ENCODE measurements at regions of chr1 and their contacts with region 1.

Region 1: GRCh38 chr1:42173155-42173933 is 8.8 kb upstream of the GUCA2A start:
- DNase-seq: peak; percentile 59 to 82 (median 77)
- ATAC-seq: peak; percentile 32 to 66
- H3K4me3 ChIP-seq: no peak overlapping the region
- H3K27ac ChIP-seq: peak overlapping the region; percentile 90
- H3K4me1 ChIP-seq: peaks cover 17% of the 10 kb centered on the region
- H3K27me3 ChIP-seq: no peaks in the 10 kb centered on the region

Region 2: DNA sequence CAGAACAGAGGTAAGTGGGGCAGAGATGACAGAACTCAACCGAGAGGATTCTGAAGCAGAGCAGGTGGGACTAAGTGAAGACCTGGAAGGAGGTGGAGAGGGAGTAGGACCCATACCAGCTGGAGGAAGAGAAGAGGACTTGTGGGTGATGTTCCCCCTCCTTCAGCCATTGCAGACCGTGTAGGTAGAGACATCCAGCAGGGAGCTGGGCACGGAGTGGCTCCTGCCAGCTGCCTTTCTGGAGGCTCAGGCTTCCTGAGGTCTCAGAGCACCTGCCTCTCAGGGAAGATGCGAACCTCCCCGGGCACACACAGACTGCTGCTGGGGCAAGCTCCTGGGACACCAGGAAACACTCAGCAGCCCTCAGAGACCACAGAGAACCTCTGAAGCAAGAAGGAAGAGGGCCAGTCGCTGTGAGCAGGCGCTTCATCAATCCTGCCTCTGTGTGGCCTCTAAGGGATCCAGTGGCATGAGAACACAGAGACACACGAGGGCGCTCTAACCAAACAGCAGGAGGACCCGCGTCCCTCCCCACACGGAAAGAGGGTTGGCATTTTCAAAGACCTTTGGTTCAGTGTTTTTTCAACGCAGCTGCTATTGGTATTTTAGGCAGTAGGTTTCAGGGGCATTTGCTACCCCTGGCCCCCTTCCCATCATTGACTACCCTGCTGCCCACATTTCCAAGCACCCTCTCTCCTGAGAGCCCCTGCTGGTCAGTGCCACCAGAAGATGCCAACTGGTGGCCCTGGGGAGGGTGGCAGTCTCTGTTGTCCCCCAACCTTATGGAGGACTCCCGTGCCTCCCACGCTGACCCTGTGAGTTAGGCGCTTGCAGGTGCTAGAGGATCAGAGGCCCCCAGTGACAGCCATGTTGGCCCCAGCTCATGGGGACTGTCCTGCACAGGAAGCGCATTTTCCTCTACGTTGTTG is 599.3 kb before region 1 on chr1:
- intact Hi-C with region 1: loop called in 1 of 4 experiments (anchors 10 kb)
- DNase-seq: peak; percentile 79 to 92 (median 88)
- ATAC-seq: peak; percentile 80 to 90
- H3K4me3 ChIP-seq: no peak overlapping the region
- H3K27ac ChIP-seq: no peak overlapping the region
- H3K4me1 ChIP-seq: no peaks in the 10 kb centered on the region
- H3K27me3 ChIP-seq: no peaks in the 10 kb centered on the region

Region 3: DNA sequence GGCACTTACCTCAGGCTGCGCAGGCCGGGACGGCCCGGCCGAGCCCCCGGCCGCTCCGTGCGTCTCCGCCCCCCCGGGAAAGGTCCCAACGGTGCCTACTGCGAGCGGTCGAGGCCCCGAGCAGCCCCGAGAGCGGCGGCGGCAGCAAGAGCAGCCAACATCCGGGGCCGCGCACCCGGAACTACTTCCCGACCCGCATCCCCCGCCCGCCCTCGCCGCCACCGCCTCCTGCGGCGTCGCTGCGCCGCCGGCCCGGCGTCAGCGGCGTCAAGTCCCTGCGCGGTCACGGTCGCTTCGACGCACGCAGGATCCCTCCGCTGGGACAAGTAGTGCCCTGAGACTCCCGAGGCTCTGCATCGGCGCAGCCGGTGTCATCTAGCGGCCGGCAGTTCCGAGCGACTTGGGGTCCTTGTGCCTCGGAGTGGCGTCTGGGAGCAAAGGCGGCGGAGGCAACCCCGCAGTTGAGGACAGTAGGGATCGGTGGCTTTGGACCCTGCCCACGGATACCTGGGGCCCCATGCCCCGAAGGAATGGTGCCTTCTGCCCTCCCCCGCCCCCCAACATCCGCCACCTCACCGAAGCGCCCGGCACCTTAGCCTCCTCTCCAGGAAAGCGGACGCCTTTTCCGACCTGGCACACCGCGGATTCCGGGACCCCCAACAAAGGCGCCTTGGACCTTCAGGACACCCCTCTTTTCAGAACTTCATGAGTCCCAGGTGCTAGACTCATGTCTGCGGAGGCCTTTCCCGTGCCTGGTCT is 161.9 kb after region 1 on chr1 and contains the start of gene FOXJ3:
- intact Hi-C with region 1: loop called in 2 of 4 experiments (anchors 10 kb)
- DNase-seq: peak; percentile 94 to 97 (median 97)
- ATAC-seq: peak; percentile 96
- H3K4me3 ChIP-seq: peak within 1 kb of the TSS; percentile 87
- H3K27ac ChIP-seq: peak within 1 kb of the TSS; percentile 80
- H3K4me1 ChIP-seq: peaks cover 2% of the 10 kb centered on the region
- H3K27me3 ChIP-seq: no peaks in the 10 kb centered on the region
- total RNA-seq, gene FOXJ3: 41.8 to 50.5 (median 45.3) TPM

Measured in right cardiac atrium (tissue), 5 donors.